GM18951 (cell line): ENCODE measurements at regions of chr15 and their contacts with region 1.

Region 1: GRCh38 chr15:92101708-92102411 is 248.4 kb downstream of the SLCO3A1 start:
- POLR2A ChIP-seq: no peak

Region 2: DNA sequence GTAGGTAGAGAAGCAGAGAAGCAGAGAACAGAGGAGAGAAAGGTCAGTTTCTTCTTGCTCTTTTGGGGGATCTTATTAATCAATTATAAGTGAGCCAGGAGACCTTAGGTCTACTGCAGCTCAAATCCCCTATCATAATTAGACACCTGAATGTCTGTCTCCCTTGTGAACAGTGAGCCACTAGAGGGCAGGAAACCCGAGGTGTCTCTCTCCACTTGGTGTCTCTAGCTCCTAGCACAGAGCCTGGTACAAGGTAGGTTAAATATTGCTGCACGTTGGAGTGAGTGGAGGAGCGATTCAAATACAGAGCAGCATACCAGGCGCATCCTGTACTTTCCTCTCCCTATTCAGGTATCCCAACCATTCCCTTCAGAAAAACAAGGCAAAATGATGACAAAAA is 289.8 kb after region 1 on chr15:
- in situ Hi-C with region 1: no loop called
- POLR2A ChIP-seq: no peak

Region 3: GRCh38 chr15:92714477-92715401 is 612.9 kb after region 1 on chr15:
- in situ Hi-C with region 1: loop called (anchors 25 kb)
- POLR2A ChIP-seq: no peak